Left cardiac atrium (tissue), 4 donors: ENCODE measurements at regions of chr13 and their contacts with region 1.

Region 1: DNA sequence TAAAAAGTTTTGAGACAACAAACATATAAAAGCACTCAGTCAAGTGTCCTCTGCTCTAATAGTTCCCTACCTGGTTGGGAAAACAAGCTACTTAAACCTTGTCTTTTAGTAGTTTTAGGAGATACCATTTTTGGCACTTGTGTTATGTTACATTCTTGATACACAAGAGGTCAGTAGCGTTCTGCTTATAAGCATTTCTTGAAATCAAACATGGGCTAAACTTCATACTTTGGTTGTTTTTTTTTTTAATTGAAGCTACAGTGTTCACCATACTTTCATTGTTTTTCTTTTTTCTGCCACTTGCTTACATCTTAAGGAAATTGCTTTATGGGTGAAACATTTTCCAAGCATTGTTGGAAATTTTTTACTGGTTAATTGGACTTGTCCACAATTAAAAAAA is 12.9 kb downstream of the NHLRC3 start:
- DNase-seq: no peak
- ATAC-seq: no peak

Region 2: DNA sequence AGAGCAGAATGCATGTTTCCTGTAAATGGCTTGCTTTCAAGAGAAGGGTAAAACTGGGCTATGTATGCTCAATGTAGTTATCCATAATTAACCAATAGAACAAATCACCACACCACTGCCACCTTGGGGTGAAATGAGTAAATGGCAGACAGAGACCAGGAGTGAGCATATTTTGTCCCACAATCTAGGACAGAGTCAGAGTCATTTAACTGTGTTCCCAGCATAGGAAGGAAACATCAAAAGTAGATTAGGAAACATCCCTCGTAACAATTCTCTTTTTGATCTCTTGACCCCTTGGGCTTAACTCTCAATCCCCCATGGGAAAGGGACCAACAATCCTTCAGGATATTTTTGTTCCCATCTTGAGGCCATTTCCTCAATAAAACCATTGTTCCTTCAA is 211.9 kb after region 1 on chr13:
- intact Hi-C with region 1: loop called in 1 of 2 experiments (anchors 10 kb)
- DNase-seq: peak; percentile 37
- ATAC-seq: peak; percentile 73 to 83

Region 3: DNA sequence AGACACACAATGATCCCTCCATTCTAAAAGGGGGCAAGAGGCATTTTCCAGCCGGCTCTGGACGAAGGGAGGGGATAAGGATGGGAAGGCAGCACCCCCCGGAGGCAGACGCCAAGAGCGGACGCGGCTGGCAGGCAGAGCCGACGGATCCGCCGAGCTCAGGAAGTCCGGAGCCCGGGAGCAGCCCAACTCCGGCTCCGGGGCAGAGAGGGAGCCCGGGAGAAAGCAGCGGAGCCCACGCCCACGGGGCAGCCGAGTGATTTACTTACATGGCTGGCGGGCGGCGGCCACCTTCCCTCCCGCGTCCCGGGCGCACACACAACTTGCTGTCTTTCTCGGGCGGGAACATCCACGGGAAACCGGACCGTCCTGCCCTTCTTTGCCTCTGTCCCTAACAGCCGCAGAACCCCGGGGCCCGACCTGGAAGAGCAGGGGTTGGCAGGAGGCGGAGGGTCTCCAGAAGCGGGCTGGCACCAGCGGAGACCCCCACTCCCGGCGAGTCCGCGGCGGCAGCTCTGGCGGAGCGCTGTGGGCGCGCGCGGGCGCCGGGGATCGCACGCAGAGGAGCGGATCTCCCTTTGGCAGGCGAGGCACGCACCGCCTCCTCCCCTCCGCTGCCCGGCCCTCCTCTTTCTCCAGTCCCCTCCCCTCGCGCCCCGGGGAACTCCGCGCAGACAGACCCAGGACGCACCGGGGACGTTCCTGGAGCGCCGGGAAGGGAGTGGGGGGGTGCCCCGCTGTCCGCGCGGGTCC is 551.6 kb after region 1 on chr13 and contains the start of gene LHFPL6:
- intact Hi-C with region 1: loop called in 1 of 2 experiments (anchors 5 kb)
- DNase-seq: peak; percentile 91
- ATAC-seq: peak; percentile 96 to 99
- total RNA-seq, gene LHFPL6: 58.2 to 67.2 TPM

Region 4: GRCh38 chr13:39676315-39676876 is 625.2 kb after region 1 on chr13:
- intact Hi-C with region 1: loop called in 1 of 2 experiments (anchors 5 kb)
- DNase-seq: no peak
- ATAC-seq: no peak